PC-9 (cell line): ENCODE measurements at regions of chr4 and their contacts with region 1.

Region 1: DNA sequence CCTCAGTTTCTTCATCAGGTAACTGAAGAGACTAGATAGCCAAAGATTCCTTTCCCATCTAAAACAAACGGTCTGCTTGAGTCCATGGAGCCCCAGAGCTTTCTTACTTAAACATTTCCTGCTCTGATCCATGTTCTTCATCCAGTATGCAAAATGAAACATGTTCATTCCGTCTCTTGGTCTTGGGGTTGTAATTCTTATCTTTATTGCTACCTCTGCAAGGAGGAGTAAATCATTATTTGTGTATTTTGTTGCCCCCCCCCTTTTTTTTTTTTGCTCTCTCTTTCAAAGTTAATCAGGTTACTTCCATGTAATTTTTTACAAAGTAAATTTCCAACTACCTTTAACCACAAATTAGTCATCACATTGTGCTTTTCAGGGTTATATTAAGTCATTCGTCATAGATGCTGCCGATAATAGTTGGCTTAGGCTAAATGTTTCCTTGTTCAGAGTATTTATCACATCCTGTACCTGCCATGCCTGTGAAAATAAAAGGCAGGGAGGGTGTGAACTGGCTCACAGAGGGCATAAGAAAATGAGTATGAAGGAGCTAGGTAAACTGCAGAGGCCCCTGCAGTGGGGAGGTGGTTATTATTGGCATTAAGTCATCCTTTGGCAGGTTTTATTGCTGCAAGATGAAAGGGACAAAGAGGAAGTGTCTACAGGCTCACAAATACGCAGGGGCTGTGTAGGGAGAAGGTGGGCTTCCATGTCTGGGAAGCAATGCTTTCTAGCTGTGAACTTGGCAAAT is 76.7 kb upstream of the HS3ST1 start:
- DNase-seq: peak; percentile 71 to 98
- H3K4me3 ChIP-seq: no peak overlapping the region
- H3K27ac ChIP-seq: peak overlapping the region; percentile 92
- H3K4me1 ChIP-seq: peaks cover 31% of the 10 kb centered on the region
- H3K27me3 ChIP-seq: no peaks in the 10 kb centered on the region
- CTCF ChIP-seq: no peak

Region 2: DNA sequence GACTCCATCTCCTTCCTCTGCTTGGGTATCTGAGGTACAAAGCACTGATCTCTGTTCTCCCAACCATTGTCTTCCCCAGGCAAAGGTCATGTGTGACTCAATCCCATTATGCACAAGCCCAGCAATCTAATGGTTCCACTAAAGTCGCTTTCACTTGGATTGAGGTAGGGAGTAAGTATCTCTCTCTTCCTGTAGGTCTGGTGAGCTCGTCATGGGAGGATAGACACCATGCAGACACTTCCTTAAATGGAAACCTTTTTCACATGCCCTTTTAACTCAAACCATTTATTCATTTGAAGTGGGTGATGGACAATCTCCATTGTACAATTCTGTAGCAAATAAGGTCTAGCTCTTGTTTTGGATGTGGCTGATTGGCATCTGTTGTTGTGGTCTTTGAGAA is 575.6 kb before region 1 on chr4:
- CTCF ChIA-PET with region 1: no interaction called
- POLR2A ChIA-PET with region 1: interaction called, 10 read pairs
- intact Hi-C with region 1: no loop called
- DNase-seq: no peak
- H3K4me3 ChIP-seq: no peak overlapping the region
- H3K27ac ChIP-seq: no peak overlapping the region
- H3K4me1 ChIP-seq: no peaks in the 10 kb centered on the region
- H3K27me3 ChIP-seq: no peaks in the 10 kb centered on the region
- CTCF ChIP-seq: no peak

Region 3: GRCh38 chr4:11421116-11421515 is 84.3 kb before region 1 on chr4:
- CTCF ChIA-PET with region 1: no interaction called
- POLR2A ChIA-PET with region 1: interaction called, 19 read pairs
- intact Hi-C with region 1: no loop called
- DNase-seq: no peak
- H3K4me3 ChIP-seq: no peak overlapping the region
- H3K27ac ChIP-seq: no peak overlapping the region
- H3K4me1 ChIP-seq: no peaks in the 10 kb centered on the region
- H3K27me3 ChIP-seq: no peaks in the 10 kb centered on the region
- CTCF ChIP-seq: no peak

Region 4: GRCh38 chr4:11548597-11549082 is 43.2 kb after region 1 on chr4:
- CTCF ChIA-PET with region 1: no interaction called
- POLR2A ChIA-PET with region 1: no interaction called
- intact Hi-C with region 1: loop called (anchors 1 kb)
- DNase-seq: peak; percentile 29 to 77
- H3K4me3 ChIP-seq: 0 out of 2 replicates have a peak overlapping the region, but pooled peaks have one; percentile 10
- H3K27ac ChIP-seq: peak overlapping the region; percentile 93
- H3K4me1 ChIP-seq: peaks cover 29% of the 10 kb centered on the region
- H3K27me3 ChIP-seq: no peaks in the 10 kb centered on the region
- CTCF ChIP-seq: no peak

Region 5: GRCh38 chr4:11614399-11614798 is 109.0 kb after region 1 on chr4:
- CTCF ChIA-PET with region 1: no interaction called
- POLR2A ChIA-PET with region 1: no interaction called
- intact Hi-C with region 1: loop called (anchors 1 kb)
- DNase-seq: peak; percentile 80 to 96
- H3K4me3 ChIP-seq: peak overlapping the region; percentile 46
- H3K27ac ChIP-seq: peak overlapping the region; percentile 98
- H3K4me1 ChIP-seq: peaks cover 48% of the 10 kb centered on the region
- H3K27me3 ChIP-seq: no peaks in the 10 kb centered on the region
- CTCF ChIP-seq: no peak